Right ventricle myocardium superior (tissue), 1 donor: ENCODE measurements at regions of chr11 and their contacts with region 1.

Region 1: GRCh38 chr11:62556108-62556871 is 9.7 kb upstream of the AHNAK start:
- DNase-seq: peak; percentile 94
- ATAC-seq: peak; percentile 64

Region 2: GRCh38 chr11:62421996-62422395 is 134.3 kb before region 1 on chr11:
- intact Hi-C with region 1: loop called (anchors 5 kb)
- DNase-seq: no peak
- ATAC-seq: no peak

Region 3: GRCh38 chr11:62931499-62932278 is 375.4 kb after region 1 on chr11:
- intact Hi-C with region 1: no loop called
- DNase-seq: no peak
- ATAC-seq: no peak